ENCODE measurements at regions of chr10 and their contacts with region 1.

Region 1: DNA sequence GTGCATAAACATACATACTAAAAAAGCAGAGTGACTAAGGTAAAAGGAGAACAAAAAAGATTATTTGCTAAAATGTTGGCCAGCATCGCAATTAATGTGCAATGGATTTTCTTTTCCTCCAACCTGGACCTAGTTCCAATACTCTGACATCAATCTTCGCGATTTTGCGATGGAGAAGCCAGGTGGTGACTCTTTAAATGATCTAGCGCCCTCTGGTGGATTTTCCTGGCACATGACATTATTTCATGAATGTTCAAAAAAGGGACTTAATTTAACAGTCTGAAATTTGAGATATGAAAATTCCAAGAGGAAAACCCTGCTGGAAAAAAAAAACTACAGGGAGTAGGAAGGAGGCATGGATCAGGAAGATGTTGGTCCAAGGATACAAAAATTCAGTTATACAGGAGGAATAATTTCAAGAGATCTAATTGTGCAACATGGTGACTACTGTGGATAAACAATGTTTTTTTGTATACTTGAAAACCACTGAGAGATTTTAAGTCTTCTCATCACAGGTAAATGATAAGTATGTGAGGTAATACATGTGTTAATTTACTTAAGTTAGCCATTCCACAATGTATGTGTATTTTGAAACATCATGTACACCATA is 4.3 kb upstream of the KCNMA1 start:
- DNase-seq: peak; percentile 69

Region 2: DNA sequence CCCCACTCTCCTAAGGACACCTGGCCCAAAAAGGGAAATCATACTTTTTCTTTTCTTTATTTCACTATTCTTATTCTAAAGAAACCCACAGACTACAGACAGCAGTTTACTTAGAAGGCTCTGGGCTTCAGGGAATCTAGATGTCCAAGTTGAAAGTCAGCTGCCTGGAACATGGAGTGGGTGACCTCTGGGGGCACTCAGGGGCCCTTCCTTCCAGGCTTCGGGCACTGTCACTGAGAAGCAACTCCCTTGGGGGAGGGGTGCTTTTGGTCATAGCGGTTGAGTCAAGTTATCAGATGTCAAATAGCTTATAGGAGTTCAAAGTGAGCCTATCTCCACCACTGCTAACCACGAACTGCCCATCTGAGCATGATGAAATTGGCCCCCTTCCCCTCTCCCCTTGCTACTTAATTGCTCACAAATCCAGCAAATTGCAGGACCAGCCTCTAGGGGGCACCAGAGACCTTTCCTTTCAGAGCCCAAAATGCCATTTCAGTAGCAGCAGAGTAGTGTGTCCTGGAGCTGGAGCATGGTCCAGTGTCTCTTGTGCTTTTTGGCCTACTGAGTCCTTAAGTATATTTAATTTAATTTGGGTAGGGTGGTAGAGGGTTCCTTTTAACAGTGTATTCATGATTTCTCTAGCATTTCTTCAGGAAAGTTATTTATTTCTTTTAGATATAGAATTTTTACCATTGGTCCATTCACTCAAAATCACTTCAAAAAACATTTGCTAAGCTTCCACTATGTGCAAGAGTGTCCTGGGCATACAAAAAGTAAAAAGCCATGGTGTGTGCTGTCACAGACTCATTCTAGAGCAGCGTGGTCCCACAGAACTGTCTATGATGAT is 468.1 kb before region 1 on chr10:
- in situ Hi-C with region 1: loop called (anchors 10 kb)
- DNase-seq: peak; percentile 71

Measured in KBM-7 (cell line).